IMR-90 (cell line): ENCODE measurements at regions of chr7 and their contacts with region 1.

Region 1: DNA sequence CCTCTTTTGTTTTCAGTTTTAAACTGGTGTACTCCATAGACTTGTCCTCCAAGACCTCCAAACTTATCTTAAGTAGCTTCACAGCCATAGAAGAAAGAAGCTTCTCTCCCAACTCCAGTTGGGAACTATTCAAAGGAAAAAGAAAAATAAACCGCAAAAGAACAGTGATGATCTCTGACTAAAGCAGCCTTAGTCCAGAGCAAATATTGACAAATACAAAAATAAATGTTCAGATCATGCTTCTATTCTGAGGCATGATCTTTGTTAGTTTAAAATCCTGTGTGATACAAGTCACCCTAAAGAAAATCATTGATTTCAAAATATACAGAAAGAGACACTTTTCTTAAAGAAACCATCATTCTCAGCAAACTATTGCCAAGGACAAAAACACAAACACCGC is 373.0 kb upstream of the SMIM30 start:
- DNase-seq: no peak
- ATAC-seq: no peak
- H3K4me3 ChIP-seq: no peak overlapping the region
- H3K27ac ChIP-seq: no peak overlapping the region
- H3K4me1 ChIP-seq: no peaks in the 10 kb centered on the region
- H3K27me3 ChIP-seq: no peaks in the 10 kb centered on the region
- CTCF ChIP-seq: no peak
- POLR2A ChIP-seq: no peak
- RAD21 ChIP-seq: no peak

Region 2: GRCh38 chr7:112510001-112510742 is 981.1 kb before region 1 on chr7:
- CTCF ChIA-PET with region 1: no interaction called
- POLR2A ChIA-PET with region 1: no interaction called
- dilution Hi-C with region 1: no loop called
- in situ Hi-C with region 1: no loop called
- intact Hi-C with region 1: no loop called
- DNase-seq: peak; percentile 80
- ATAC-seq: peak; percentile 83
- H3K4me3 ChIP-seq: no peak overlapping the region
- H3K27ac ChIP-seq: no peak overlapping the region
- H3K4me1 ChIP-seq: peaks cover 8% of the 10 kb centered on the region
- H3K27me3 ChIP-seq: peaks cover 10% of the 10 kb centered on the region
- CTCF ChIP-seq: no peak
- POLR2A ChIP-seq: no peak
- RAD21 ChIP-seq: no peak

Region 3: DNA sequence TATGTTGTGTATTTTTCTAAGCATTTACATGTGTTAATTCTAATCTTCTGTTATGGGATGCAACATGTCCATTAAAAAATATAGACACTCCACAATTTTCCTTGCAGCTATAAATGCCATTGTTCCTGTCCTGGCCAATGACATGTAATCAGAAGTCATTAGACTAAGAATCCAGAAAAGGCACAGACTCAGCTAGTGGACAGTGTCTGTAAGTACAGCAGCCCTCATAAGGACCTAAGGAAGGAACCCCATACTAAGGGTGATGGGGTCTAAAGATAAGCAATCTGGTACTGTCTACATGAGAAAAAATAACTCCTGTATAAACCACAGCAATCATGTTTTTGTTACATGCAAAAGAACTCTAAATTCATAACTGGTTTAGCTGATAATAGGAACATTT is 520.5 kb before region 1 on chr7:
- CTCF ChIA-PET with region 1: no interaction called
- POLR2A ChIA-PET with region 1: no interaction called
- dilution Hi-C with region 1: no loop called
- in situ Hi-C with region 1: no loop called
- intact Hi-C with region 1: loop called (anchors 5 kb)
- DNase-seq: no peak
- ATAC-seq: no peak
- H3K4me3 ChIP-seq: no peak overlapping the region
- H3K27ac ChIP-seq: no peak overlapping the region
- H3K4me1 ChIP-seq: no peaks in the 10 kb centered on the region
- H3K27me3 ChIP-seq: no peaks in the 10 kb centered on the region
- CTCF ChIP-seq: no peak
- POLR2A ChIP-seq: no peak
- RAD21 ChIP-seq: no peak

Region 4: DNA sequence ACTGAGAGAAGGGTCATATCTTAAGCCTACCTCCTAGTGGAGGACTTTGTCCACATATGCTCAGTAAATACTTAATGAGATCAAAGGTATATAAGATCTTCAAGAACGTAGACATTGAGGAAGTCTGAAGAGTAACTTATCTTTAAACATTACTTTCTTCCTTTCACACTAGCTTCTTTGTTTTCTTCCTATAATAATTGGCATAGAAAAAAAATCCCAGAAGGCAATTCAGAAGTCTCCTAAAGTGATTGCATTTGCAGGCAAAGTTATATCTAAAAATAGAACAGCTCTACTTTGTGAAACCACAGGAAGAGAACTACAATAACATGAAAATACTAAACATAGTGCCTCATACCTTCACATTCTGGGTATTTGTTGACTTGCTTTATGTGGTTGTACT is 277.1 kb after region 1 on chr7:
- CTCF ChIA-PET with region 1: no interaction called
- POLR2A ChIA-PET with region 1: no interaction called
- dilution Hi-C with region 1: no loop called
- in situ Hi-C with region 1: no loop called
- intact Hi-C with region 1: no loop called
- DNase-seq: no peak
- ATAC-seq: no peak
- H3K4me3 ChIP-seq: no peak overlapping the region
- H3K27ac ChIP-seq: no peak overlapping the region
- H3K4me1 ChIP-seq: no peaks in the 10 kb centered on the region
- H3K27me3 ChIP-seq: no peaks in the 10 kb centered on the region
- CTCF ChIP-seq: no peak
- POLR2A ChIP-seq: no peak
- RAD21 ChIP-seq: no peak